ENCODE measurements at regions of chr4 and their contacts with region 1.

Region 1: GRCh38 chr4:99300934-99301333 is 10.1 kb upstream of the ADH1A start:
- DNase-seq: peak; percentile 85 to 96 (median 95)
- H3K4me3 ChIP-seq: no peak overlapping the region
- H3K27ac ChIP-seq: peak overlapping the region in 1 of 2 donors; percentile 69
- H3K4me1 ChIP-seq: peaks cover 5% of the 10 kb centered on the region
- H3K27me3 ChIP-seq: no peaks in the 10 kb centered on the region
- CTCF ChIP-seq: no peak
- EP300 ChIP-seq: peak; percentile 73
- POLR2A ChIP-seq: no peak

Region 2: GRCh38 chr4:99389606-99390005 is 88.7 kb after region 1 on chr4:
- intact Hi-C with region 1: loop called in 1 of 4 experiments (anchors 5 kb)
- DNase-seq: no peak
- H3K4me3 ChIP-seq: no peak overlapping the region
- H3K27ac ChIP-seq: no peak overlapping the region
- H3K4me1 ChIP-seq: no peaks in the 10 kb centered on the region
- H3K27me3 ChIP-seq: no peaks in the 10 kb centered on the region
- CTCF ChIP-seq: no peak
- EP300 ChIP-seq: no peak
- POLR2A ChIP-seq: no peak

Region 3: DNA sequence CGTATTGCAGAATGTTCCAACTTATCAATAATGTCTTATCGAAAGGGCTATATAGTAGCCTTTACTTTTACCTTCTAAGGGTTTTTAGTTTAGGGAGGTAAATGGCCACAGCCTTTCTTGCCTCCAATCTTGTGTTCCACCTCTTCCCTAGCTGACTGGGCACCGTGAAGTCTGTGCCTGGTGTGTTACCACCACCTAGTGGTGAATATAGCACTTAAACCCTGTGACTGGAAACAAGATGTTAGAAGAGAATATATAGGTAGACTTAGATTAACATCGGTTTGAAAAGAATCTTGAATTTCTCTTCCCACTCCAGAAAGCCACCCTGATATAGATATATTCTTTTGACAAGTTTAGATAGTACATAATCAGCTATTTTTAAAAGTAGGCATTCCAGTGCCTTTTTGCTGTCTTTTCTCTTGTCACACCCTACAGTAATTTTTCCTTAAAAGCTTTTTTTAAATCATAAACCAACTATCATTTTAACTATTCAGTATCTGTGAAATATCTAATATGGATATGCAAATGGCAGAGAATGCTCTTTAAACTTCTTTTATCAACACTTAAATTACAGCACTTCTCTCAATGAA is 162.0 kb after region 1 on chr4:
- intact Hi-C with region 1: no loop called
- DNase-seq: peak; percentile 24 to 64 (median 38)
- H3K4me3 ChIP-seq: no peak overlapping the region
- H3K27ac ChIP-seq: no peak overlapping the region
- H3K4me1 ChIP-seq: no peaks in the 10 kb centered on the region
- H3K27me3 ChIP-seq: no peaks in the 10 kb centered on the region
- CTCF ChIP-seq: peak; percentile 62 to 77 (median 74)
- EP300 ChIP-seq: no peak
- POLR2A ChIP-seq: no peak

Measured in ovary (tissue), 10 donors.